Calu3 (cell line): ENCODE measurements at regions of chr12 and their contacts with region 1.

Region 1: GRCh38 chr12:17866802-17867201 is 223.2 kb downstream of the RERGL start:
- DNase-seq: no peak
- H3K4me3 Mint-ChIP-seq: no peak overlapping the region
- H3K27ac Mint-ChIP-seq: no peak overlapping the region
- H3K4me1 Mint-ChIP-seq: no peaks in the 10 kb centered on the region
- H3K27me3 Mint-ChIP-seq: no peaks in the 10 kb centered on the region
- CTCF ChIP-seq: no peak

Region 2: GRCh38 chr12:17778242-17778641 is 88.6 kb before region 1 on chr12:
- CTCF ChIA-PET with region 1: no interaction called
- intact Hi-C with region 1: loop called (anchors 2 kb)
- DNase-seq: no peak
- H3K4me3 Mint-ChIP-seq: no peak overlapping the region
- H3K27ac Mint-ChIP-seq: no peak overlapping the region
- H3K4me1 Mint-ChIP-seq: no peaks in the 10 kb centered on the region
- H3K27me3 Mint-ChIP-seq: no peaks in the 10 kb centered on the region
- CTCF ChIP-seq: no peak